ENCODE measurements at regions of chr5 and their contacts with region 1.

Region 1: DNA sequence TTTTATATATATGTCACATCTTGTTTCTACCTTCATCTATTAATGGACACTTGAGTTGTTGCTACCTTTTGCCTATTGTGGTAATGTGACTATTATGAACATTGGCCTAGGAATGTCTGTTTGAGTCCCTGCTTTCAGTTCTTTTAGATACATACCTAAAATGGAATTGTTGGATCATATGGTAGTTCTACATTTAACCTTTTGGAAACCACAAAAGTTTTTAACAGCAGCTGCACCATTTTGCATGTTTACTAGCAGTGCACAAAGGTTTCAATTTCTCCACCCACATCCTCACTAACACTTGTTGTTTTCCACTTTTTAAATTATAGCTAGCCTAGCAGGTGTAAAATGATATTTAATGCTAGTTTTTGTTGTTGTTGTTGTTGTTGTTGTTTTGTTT is 88.4 kb downstream of the GALNT10 start:
- DNase-seq: no peak
- H3K4me3 Mint-ChIP-seq: no peak overlapping the region
- H3K27ac Mint-ChIP-seq: no peak overlapping the region
- H3K4me1 Mint-ChIP-seq: peaks cover 30% of the 10 kb centered on the region
- H3K27me3 Mint-ChIP-seq: no peaks in the 10 kb centered on the region

Region 2: GRCh38 chr5:153340139-153340538 is 938.8 kb before region 1 on chr5:
- CTCF ChIA-PET with region 1: no interaction called
- intact Hi-C with region 1: no loop called
- DNase-seq: no peak
- H3K4me3 Mint-ChIP-seq: no peak overlapping the region
- H3K27ac Mint-ChIP-seq: no peak overlapping the region
- H3K4me1 Mint-ChIP-seq: no peaks in the 10 kb centered on the region
- H3K27me3 Mint-ChIP-seq: no peaks in the 10 kb centered on the region

Region 3: GRCh38 chr5:154196955-154197652 is 81.8 kb before region 1 on chr5:
- CTCF ChIA-PET with region 1: no interaction called
- intact Hi-C with region 1: loop called (anchors 1 kb)
- DNase-seq: no peak
- H3K4me3 Mint-ChIP-seq: no peak overlapping the region
- H3K27ac Mint-ChIP-seq: peak overlapping the region; percentile 86
- H3K4me1 Mint-ChIP-seq: peaks cover 67% of the 10 kb centered on the region
- H3K27me3 Mint-ChIP-seq: no peaks in the 10 kb centered on the region

Region 4: GRCh38 chr5:154228696-154229095 is 50.2 kb before region 1 on chr5:
- CTCF ChIA-PET with region 1: no interaction called
- intact Hi-C with region 1: loop called (anchors 2 kb)
- DNase-seq: no peak
- H3K4me3 Mint-ChIP-seq: no peak overlapping the region
- H3K27ac Mint-ChIP-seq: peak overlapping the region; percentile 8
- H3K4me1 Mint-ChIP-seq: peaks cover 16% of the 10 kb centered on the region
- H3K27me3 Mint-ChIP-seq: no peaks in the 10 kb centered on the region

Region 5: DNA sequence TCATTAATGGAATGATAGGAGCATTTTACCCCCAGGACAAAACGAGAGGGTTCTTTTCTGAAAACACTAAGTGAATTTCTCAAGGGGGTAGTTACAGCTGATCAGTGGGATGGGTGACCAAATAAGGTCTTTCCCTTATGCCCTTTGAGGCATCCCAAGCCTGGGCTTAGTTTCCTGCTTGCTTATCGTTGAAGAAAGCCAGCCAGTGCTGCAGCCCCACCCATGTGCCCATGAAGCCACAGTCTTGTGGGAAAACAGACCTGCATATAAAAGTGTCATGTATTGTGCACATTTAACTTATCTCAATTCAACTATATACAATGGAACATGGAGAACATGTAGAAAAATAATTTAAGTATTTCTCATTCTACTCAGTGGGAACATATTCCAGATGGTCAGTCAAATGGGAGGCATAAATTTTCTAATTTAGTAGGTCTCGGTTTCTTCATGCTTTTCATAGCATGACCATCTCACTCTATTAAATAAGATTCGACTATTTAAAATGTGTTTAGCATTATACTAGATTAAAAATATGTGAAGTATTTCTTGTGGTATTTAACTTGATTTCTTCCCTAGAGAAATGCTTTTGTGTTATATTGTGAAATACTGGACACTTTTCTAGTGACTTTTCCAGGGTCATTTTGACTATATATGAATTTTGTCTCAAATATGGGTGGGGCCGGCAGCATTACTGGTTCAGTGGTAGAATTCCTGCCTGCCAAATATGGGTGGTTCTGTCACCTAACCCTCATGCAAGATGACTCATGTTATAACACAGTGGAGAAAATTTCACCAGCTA is 1858.4 kb after region 1 on chr5:
- CTCF ChIA-PET with region 1: no interaction called
- intact Hi-C with region 1: no loop called
- DNase-seq: no peak
- H3K4me3 Mint-ChIP-seq: no peak overlapping the region
- H3K27ac Mint-ChIP-seq: no peak overlapping the region
- H3K4me1 Mint-ChIP-seq: no peaks in the 10 kb centered on the region
- H3K27me3 Mint-ChIP-seq: peaks cover 7% of the 10 kb centered on the region

Measured in activated naive CD4-positive, alpha-beta T cell treated with anti-CD3 and anti-CD28 coated beads for 36 hours (primary cell).